Right ventricle myocardium inferior (tissue), 1 donor: ENCODE measurements at regions of chr20 and their contacts with region 1.

Region 1: GRCh38 chr20:32357869-32358631 is at the start of gene ASXL1:
- DNase-seq: peak; percentile 99
- ATAC-seq: peak; percentile 97
- total RNA-seq, gene ASXL1: 23.1 TPM

Region 2: GRCh38 chr20:32207626-32208498 is 150.2 kb before region 1 on chr20 and contains the starts of genes PLAGL2 and POFUT1:
- intact Hi-C with region 1: loop called (anchors 5 kb)
- DNase-seq: peak; percentile 96
- ATAC-seq: peak; percentile 98
- total RNA-seq, gene PLAGL2: 6.0 TPM
- total RNA-seq, gene POFUT1: 24.5 TPM

Region 3: GRCh38 chr20:32285621-32286371 is 72.3 kb before region 1 on chr20:
- intact Hi-C with region 1: loop called (anchors 5 kb)
- DNase-seq: no peak
- ATAC-seq: peak; percentile 39

Region 4: DNA sequence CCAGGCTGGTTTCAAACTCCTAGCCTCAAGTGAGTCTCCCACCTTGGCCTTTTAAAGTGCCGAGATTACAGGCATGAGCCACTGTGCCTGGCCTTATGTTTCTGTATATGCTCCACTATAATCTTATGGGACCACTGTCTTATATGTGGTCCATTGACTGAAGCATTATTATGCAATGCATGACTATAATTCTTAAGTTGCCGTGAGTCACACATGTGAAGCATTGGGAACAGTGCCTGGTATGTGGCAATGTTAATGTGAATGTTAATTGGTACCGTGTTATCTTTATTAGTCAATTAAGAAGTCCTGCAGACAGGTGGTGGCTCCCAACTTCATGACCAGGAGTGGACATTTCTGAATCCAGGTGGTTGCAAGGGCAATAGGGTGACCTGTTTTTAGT is 14.6 kb before region 1 on chr20:
- intact Hi-C with region 1: no loop called
- DNase-seq: no peak
- ATAC-seq: no peak

Region 5: DNA sequence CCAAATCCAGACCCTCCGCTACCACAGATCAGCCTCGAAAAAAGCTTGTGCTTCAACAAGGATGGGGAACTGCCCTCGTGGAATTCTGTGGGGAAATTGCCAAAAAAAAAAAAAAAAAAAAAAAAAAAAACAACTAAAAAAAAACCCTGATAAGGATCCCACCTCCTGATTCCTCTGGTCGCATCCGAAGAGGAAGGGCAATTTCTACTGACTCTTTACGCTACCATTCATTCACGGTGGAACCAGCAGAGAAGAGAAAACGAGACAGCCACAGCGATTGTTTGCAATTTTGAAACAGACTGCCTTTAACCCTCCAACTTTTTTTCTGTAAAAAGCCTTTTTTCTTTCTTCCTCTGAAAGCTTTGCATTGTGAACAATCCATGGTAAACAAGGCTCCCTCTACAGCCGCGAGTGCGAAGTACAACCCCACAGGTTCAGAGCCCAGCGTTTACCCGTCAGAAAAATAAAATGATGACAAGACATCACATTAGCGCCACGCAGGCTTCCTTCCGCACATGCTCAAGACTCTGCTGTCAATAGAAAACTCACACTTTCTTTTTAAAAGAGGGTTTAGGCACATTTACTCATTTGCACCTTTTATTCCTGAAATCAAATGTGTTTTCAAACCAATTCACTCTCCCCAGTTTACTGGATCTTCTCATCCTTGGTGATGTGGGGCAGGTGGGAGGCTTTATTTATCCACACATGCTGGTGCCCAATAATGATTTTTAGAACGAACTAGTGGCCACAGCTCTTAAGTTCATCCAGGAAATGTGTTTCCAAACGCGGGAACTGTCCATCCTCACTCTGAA is 127.1 kb after region 1 on chr20:
- intact Hi-C with region 1: loop called (anchors 2 kb)
- DNase-seq: no peak
- ATAC-seq: peak; percentile 70

Region 6: GRCh38 chr20:32871627-32872160 is 513.6 kb after region 1 on chr20:
- intact Hi-C with region 1: no loop called
- DNase-seq: no peak
- ATAC-seq: peak; percentile 46